Calu3 (cell line): ENCODE measurements at regions of chr15 and their contacts with region 1.

Region 1: DNA sequence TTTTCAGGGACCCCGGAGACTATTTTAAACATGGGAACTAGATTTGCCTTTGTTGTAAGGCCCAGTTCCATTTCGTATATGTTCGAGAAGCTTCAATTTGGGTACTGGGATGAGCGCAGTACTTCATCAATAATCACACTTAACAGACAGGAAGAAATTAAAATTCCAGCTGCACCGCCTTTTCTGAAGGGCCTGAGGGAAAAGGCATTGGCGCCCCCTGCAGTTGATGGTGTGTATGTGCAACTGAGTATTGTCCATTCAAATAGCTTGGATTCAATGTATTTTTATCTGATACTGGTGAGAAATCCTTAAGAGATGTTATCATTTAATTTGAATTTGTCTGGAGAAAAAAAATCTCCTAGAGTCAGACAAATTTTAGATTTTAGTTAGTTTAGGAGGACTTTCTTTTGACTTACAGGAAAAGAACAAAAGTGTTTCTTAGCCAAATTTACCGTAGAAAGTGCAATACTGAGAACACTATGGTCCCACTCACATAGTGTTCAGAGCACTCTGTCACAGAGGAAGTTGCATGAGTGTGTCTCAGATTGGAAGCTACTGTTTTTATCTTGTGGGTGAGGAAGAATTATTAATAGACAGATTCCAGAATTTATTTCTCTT is 5.4 kb upstream of the ALDH1A2 start:
- DNase-seq: peak; percentile 84
- H3K4me3 Mint-ChIP-seq: no peak overlapping the region
- H3K27ac Mint-ChIP-seq: no peak overlapping the region
- H3K4me1 Mint-ChIP-seq: peaks cover 8% of the 10 kb centered on the region
- H3K27me3 Mint-ChIP-seq: peaks cover 15% of the 10 kb centered on the region
- CTCF ChIP-seq: peak; percentile 91

Region 2: GRCh38 chr15:57561041-57561711 is 509.7 kb before region 1 on chr15:
- CTCF ChIA-PET with region 1: interaction called, 3 read pairs
- intact Hi-C with region 1: loop called (anchors 2 kb)
- DNase-seq: peak; percentile 86
- H3K4me3 Mint-ChIP-seq: peak overlapping the region; percentile 7
- H3K27ac Mint-ChIP-seq: peak overlapping the region; percentile 93
- H3K4me1 Mint-ChIP-seq: peaks cover 19% of the 10 kb centered on the region
- H3K27me3 Mint-ChIP-seq: no peaks in the 10 kb centered on the region
- CTCF ChIP-seq: peak; percentile 91

Region 3: GRCh38 chr15:57667171-57667849 is 403.6 kb before region 1 on chr15:
- CTCF ChIA-PET with region 1: no interaction called
- intact Hi-C with region 1: loop called (anchors 5 kb)
- DNase-seq: peak; percentile 55
- H3K4me3 Mint-ChIP-seq: peak overlapping the region; percentile 47
- H3K27ac Mint-ChIP-seq: peak overlapping the region; percentile 1
- H3K4me1 Mint-ChIP-seq: peaks cover 66% of the 10 kb centered on the region
- H3K27me3 Mint-ChIP-seq: no peaks in the 10 kb centered on the region
- CTCF ChIP-seq: no peak

Region 4: DNA sequence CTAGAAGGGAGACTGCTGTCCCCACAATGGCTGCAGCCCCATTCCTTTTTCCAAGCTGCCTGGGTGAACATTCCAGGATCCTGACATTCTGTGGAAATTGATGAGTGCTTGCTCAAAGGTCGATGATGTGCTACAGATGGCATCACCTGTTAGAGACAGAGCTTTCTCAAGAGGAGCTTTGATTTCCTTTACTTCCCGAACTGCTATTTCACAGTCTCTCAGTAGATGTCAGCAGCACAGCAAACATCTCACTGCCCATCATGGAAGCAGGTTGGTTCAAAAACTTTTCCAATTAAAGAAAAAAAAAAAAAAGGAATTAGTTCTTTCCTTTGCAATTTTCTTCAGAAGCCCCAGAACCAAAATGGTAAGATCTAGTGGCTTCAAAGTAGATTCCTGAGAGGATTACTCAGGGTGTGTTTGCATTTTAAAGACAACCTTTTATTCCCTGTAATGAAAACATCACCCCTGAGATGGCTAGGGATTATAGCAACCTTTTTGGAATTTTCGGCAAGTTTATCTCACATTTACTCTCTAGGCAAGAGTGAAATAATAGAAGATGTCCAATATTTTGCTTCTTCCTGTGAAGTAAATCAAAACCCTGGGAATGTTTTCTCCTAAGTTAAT is 319.6 kb before region 1 on chr15:
- CTCF ChIA-PET with region 1: interaction called, 48 read pairs
- intact Hi-C with region 1: loop called (anchors 1 kb)
- DNase-seq: peak; percentile 37
- H3K4me3 Mint-ChIP-seq: no peak overlapping the region
- H3K27ac Mint-ChIP-seq: no peak overlapping the region
- H3K4me1 Mint-ChIP-seq: no peaks in the 10 kb centered on the region
- H3K27me3 Mint-ChIP-seq: no peaks in the 10 kb centered on the region
- CTCF ChIP-seq: peak; percentile 40

Region 5: GRCh38 chr15:57769266-57769665 is 301.6 kb before region 1 on chr15:
- CTCF ChIA-PET with region 1: no interaction called
- intact Hi-C with region 1: no loop called
- DNase-seq: no peak
- H3K4me3 Mint-ChIP-seq: no peak overlapping the region
- H3K27ac Mint-ChIP-seq: no peak overlapping the region
- H3K4me1 Mint-ChIP-seq: peaks cover 10% of the 10 kb centered on the region
- H3K27me3 Mint-ChIP-seq: peaks cover 25% of the 10 kb centered on the region
- CTCF ChIP-seq: no peak

Region 6: DNA sequence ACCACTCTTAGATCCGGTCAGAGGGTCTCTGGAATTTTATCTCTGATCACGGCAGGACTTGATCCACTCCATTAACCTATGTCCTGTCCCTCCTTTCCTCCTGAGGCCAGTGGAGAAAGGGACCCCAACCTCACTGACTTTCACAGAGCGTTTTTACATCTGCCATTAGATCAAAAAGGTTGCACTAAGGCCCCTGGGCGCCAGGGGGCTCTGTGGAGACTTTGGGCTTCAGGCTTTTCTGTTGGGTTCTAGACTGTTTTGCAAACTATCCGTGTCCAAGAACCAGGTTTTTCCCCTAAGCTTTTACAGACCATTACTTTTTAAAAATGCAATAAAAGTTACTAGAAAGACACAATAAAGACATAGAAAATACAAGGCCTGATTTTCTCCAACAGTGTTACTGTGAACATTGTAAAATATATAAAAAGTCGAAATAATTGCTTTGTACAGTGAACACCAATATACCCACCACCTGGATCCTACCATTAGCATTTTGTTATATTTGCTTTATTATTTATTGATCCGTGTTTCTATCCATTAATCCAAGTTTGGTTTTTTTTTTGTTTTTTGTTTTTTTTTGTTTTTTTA is 204.7 kb before region 1 on chr15:
- CTCF ChIA-PET with region 1: interaction called, 45 read pairs
- intact Hi-C with region 1: loop called (anchors 1 kb)
- DNase-seq: peak; percentile 86
- H3K4me3 Mint-ChIP-seq: no peak overlapping the region
- H3K27ac Mint-ChIP-seq: no peak overlapping the region
- H3K4me1 Mint-ChIP-seq: peaks cover 8% of the 10 kb centered on the region
- H3K27me3 Mint-ChIP-seq: no peaks in the 10 kb centered on the region
- CTCF ChIP-seq: peak; percentile 93

Region 7: DNA sequence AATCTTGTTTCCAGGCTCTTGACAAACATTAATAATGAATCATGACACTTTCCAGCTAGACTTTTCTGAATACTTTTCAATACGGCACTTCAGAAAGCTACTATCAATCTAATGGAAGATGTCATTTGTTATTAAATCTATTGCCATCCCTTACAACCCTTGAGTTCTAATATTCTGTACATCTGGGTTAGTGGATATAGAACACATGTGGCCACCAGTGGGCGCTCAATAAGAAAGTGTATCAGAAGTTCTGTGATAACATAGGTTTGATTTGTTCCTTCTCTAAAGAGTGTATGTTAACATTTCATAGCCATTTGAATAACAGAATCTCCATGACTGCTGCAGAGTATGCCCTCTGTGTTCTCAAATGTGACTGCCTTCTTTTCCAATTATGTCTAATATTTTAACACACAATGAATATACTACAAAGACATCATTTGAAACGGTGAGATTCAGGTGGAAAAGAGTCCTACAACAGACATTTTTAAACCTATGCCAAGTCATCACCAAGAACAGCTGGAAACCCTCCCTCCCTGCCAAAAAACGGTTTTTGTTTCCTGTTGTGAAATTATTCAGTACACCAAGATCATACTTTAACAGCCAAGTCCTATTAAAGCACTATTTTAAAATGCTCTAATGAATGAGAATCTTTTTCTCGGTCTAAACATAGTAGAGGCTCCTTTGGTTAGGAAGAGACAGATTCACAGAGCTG is 27.6 kb before region 1 on chr15:
- CTCF ChIA-PET with region 1: interaction called, 10 read pairs
- intact Hi-C with region 1: no loop called
- DNase-seq: peak; percentile 65
- H3K4me3 Mint-ChIP-seq: no peak overlapping the region
- H3K27ac Mint-ChIP-seq: no peak overlapping the region
- H3K4me1 Mint-ChIP-seq: peaks cover 91% of the 10 kb centered on the region
- H3K27me3 Mint-ChIP-seq: no peaks in the 10 kb centered on the region
- CTCF ChIP-seq: peak; percentile 72